ENCODE measurements at regions of chr5 and their contacts with region 1.

Region 1: DNA sequence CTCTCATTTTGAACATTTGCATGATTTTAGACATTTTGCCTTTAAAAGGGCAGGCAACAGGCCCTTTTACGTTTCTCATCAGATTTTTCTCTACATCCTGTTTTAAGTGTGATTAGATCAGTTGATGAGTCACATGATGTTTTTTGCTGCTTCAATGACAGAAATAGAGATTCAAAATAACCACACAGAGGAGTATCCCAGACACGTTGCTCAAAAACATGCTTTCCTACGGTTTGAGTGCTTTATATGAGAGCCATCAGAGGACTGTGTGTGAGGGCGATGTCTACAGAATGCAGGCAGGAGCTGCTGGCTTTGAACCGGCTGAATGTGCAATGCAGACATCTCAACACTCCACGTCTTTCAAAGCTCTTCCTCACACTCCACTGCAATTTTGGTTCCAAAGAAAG is 42.1 kb downstream of the OTULIN start:
- DNase-seq: no peak
- ATAC-seq: no peak
- H3K4me3 ChIP-seq: no peak overlapping the region
- H3K27ac ChIP-seq: no peak overlapping the region
- H3K4me1 ChIP-seq: no peaks in the 10 kb centered on the region
- H3K27me3 ChIP-seq: no peaks in the 10 kb centered on the region
- CTCF ChIP-seq: no peak
- EP300 ChIP-seq: no peak
- POLR2A ChIP-seq: no peak
- RAD21 ChIP-seq: no peak

Region 2: DNA sequence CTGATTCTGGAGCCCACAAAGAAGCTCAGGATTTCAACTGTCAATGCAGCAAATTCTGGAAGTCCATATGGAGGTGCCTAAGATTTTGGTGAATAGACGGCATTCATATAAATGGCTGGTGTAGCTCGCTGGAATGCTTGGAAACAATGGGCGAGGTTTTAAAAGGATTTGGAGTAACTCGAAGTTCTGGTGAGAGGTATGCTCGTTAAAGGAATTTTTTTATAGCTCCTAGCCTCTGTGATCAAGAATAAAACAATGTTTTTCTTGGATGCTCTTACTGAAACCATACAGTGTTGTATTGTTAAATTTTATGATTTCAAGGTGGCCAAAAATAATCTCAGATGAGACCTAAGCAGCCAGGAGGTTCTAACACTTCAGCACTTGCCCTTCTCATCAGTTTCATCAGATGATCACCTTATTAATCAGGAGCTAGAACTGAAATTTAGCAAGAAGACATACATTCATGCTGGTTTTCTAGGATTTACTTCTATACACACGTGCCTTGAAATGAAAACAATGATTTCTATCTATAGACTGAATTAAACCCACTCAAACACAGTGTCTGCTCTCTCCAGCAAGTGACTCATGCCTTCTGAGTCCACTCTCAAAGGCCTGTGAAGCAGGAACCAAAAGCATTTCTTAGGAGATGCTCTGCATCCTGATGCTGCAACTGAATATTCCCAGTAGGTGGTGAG is 37.1 kb after region 1 on chr5:
- CTCF ChIA-PET with region 1: no interaction called
- POLR2A ChIA-PET with region 1: no interaction called
- RAD21 ChIA-PET with region 1: no interaction called
- SMC1A ChIA-PET with region 1: no interaction called
- in situ Hi-C with region 1: no loop called
- intact Hi-C with region 1: no loop called
- DNase-seq: no peak
- ATAC-seq: peak; percentile 32; the same call in 2 of the 3 replicates
- H3K4me3 ChIP-seq: no peak overlapping the region
- H3K27ac ChIP-seq: no peak overlapping the region
- H3K4me1 ChIP-seq: peaks cover 13% of the 10 kb centered on the region
- H3K27me3 ChIP-seq: no peaks in the 10 kb centered on the region
- CTCF ChIP-seq: no peak
- EP300 ChIP-seq: no peak
- POLR2A ChIP-seq: no peak
- RAD21 ChIP-seq: no peak

Region 3: GRCh38 chr5:16465544-16466466 is 1759.2 kb after region 1 on chr5 and contains the start of gene ZNF622:
- CTCF ChIA-PET with region 1: no interaction called
- POLR2A ChIA-PET with region 1: no interaction called
- RAD21 ChIA-PET with region 1: no interaction called
- SMC1A ChIA-PET with region 1: no interaction called
- in situ Hi-C with region 1: loop called (anchors 25 kb)
- intact Hi-C with region 1: no loop called
- DNase-seq: peak; percentile 68
- ATAC-seq: peak; percentile 87
- H3K4me3 ChIP-seq: peak within 1 kb of the TSS; percentile 95
- H3K27ac ChIP-seq: peak within 1 kb of the TSS; percentile 94
- H3K4me1 ChIP-seq: peaks cover 24% of the 10 kb centered on the region
- H3K27me3 ChIP-seq: no peaks in the 10 kb centered on the region
- CTCF ChIP-seq: no peak
- EP300 ChIP-seq: no peak
- POLR2A ChIP-seq: peak; percentile 99
- RAD21 ChIP-seq: no peak
- polyA plus RNA-seq, gene ZNF622: 9.0 to 18.1 TPM